ENCODE measurements at regions of chr4 and their contacts with region 1.

Region 1: DNA sequence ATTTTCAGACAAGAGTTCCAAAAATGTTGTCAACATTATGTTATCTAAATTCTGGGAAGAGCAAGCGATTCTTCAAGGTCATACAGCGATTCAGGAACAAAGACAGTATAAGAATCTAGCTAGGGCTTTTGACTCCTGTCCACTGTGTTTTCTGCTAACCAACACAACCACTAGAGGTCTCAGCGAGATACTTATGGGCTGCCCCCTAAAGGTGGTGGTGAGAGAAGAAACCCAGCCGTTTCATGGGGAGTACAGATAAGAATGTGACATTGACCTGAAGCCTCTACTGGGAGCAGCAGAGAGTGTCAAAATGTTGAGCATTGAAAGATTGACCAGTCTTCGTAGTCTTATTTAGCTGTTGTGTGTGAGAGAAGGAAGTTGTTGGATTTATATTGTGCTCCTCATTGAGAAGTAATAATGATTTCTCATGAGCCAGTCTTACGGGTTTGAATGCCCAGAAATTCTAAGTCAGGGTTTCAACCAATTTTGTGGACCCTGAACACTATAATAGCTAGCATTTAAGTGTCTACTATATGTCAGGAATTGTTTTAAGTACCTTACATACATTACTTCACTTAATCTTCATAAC is 168.3 kb downstream of the SPRY1 start:
- DNase-seq: peak; percentile 15 to 81 (median 52)
- ATAC-seq: peak; percentile 98
- H3K4me3 ChIP-seq: no peak overlapping the region
- H3K4me3 Mint-ChIP-seq: no peak overlapping the region
- H3K27ac ChIP-seq: no peak overlapping the region
- H3K27ac Mint-ChIP-seq: no peak overlapping the region
- H3K4me1 ChIP-seq: no peaks in the 10 kb centered on the region
- H3K4me1 Mint-ChIP-seq: peaks cover 3% of the 10 kb centered on the region
- H3K27me3 ChIP-seq: no peaks in the 10 kb centered on the region
- H3K27me3 Mint-ChIP-seq: peaks cover 2% of the 10 kb centered on the region
- CTCF ChIP-seq: peak; percentile 95

Region 2: GRCh38 chr4:123102897-123103471 is 461.9 kb before region 1 on chr4:
- CTCF ChIA-PET with region 1: no interaction called
- POLR2A ChIA-PET with region 1: no interaction called
- intact Hi-C with region 1: loop called in 1 of 2 experiments (anchors 10 kb)
- DNase-seq: peak in 2 of 9 experiments; percentile 16 to 38
- ATAC-seq: peak; percentile 49
- H3K4me3 ChIP-seq: no peak overlapping the region
- H3K4me3 Mint-ChIP-seq: no peak overlapping the region
- H3K27ac ChIP-seq: no peak overlapping the region
- H3K27ac Mint-ChIP-seq: no peak overlapping the region
- H3K4me1 ChIP-seq: no peaks in the 10 kb centered on the region
- H3K4me1 Mint-ChIP-seq: no peaks in the 10 kb centered on the region
- H3K27me3 ChIP-seq: no peaks in the 10 kb centered on the region
- H3K27me3 Mint-ChIP-seq: no peaks in the 10 kb centered on the region
- CTCF ChIP-seq: peak; percentile 61

Region 3: DNA sequence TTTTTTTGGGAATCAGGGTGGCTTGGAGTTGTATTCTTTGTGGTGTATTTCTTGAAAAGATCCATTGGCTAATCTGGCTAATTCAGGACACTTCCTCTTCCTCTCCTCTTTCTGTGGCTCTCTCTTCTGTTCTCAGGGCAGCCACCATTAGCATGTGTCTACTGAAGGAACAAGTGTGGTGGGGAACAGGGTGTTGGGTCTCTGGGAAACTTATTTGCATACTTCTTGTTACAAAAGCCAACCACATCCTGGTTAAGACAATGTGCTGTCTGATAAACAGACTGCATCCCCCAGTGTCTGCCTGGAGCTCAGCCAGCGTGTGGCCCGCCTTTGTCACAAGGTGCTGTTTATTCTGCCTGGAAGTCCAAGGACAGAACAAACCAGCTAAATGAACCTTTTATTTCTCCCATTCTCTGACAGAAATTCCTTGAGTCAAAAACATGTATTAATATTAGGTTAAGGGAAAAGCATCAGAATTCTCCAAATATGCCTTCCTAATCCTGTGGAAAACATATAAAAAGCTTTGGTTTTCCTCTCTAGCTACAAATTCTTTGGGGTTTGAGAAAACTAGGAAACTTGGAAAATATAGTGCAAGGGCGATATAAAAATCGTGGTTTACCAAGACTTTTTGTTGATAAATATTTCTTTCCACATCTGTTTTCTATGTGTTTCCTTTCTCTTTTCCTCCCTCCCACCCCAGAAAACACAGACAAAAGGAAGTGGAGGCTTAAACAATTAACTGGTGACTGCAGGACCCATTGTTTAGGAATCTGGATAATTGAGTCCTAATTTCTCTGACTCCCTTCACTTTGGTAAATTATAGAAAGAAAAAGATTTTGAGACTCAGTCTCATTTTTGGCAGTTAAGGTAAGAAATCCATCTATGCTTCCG is 35.3 kb after region 1 on chr4:
- CTCF ChIA-PET with region 1: interaction called, 6 read pairs
- POLR2A ChIA-PET with region 1: interaction called, 5 read pairs
- intact Hi-C with region 1: loop called in 1 of 2 experiments (anchors 2 kb)
- DNase-seq: peak; percentile 25 to 88 (median 65)
- ATAC-seq: peak; percentile 97
- H3K4me3 ChIP-seq: no peak overlapping the region
- H3K4me3 Mint-ChIP-seq: peak overlapping the region; percentile 51
- H3K27ac ChIP-seq: peak overlapping the region in 1 of 2 experiments; percentile 54
- H3K27ac Mint-ChIP-seq: peak overlapping the region; percentile 95
- H3K4me1 ChIP-seq: peaks cover 26% of the 10 kb centered on the region
- H3K4me1 Mint-ChIP-seq: peaks cover 57% of the 10 kb centered on the region
- H3K27me3 ChIP-seq: no peaks in the 10 kb centered on the region
- H3K27me3 Mint-ChIP-seq: no peaks in the 10 kb centered on the region
- CTCF ChIP-seq: no peak

Region 4: DNA sequence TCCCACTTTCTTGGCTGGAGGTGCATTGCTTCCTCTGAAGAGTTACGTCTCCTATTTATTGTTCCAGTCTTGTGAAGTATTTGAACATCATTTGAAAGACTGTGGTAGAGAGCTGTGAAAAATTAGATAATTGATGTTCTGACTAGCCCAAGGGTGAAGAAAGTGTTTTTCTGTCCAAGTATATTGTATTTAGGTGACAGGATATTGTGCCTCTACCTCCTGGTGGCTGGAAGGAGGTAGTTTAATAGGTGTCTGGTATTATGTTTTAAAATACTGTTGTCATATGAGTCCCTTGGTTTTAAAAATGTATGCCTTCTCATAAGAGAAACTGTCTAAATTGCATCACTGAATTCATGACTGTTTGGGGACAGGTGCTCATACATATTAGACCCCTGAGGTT is 57.7 kb after region 1 on chr4:
- CTCF ChIA-PET with region 1: interaction called, 10 read pairs
- POLR2A ChIA-PET with region 1: no interaction called
- intact Hi-C with region 1: loop called (anchors 2 to 5 kb)
- DNase-seq: peak in 1 of 9 experiments; percentile 17
- ATAC-seq: no peak
- H3K4me3 ChIP-seq: no peak overlapping the region
- H3K4me3 Mint-ChIP-seq: no peak overlapping the region
- H3K27ac ChIP-seq: no peak overlapping the region
- H3K27ac Mint-ChIP-seq: no peak overlapping the region
- H3K4me1 ChIP-seq: peaks cover 2% of the 10 kb centered on the region
- H3K4me1 Mint-ChIP-seq: peaks cover 10% of the 10 kb centered on the region
- H3K27me3 ChIP-seq: no peaks in the 10 kb centered on the region
- H3K27me3 Mint-ChIP-seq: no peaks in the 10 kb centered on the region
- CTCF ChIP-seq: no peak

Region 5: GRCh38 chr4:123671633-123672404 is 107.0 kb after region 1 on chr4:
- CTCF ChIA-PET with region 1: interaction called, 11 read pairs
- POLR2A ChIA-PET with region 1: no interaction called
- intact Hi-C with region 1: no loop called
- DNase-seq: no peak
- ATAC-seq: no peak
- H3K4me3 ChIP-seq: no peak overlapping the region
- H3K4me3 Mint-ChIP-seq: peak overlapping the region; percentile 37
- H3K27ac ChIP-seq: no peak overlapping the region
- H3K27ac Mint-ChIP-seq: no peak overlapping the region
- H3K4me1 ChIP-seq: no peaks in the 10 kb centered on the region
- H3K4me1 Mint-ChIP-seq: peaks cover 5% of the 10 kb centered on the region
- H3K27me3 ChIP-seq: no peaks in the 10 kb centered on the region
- H3K27me3 Mint-ChIP-seq: no peaks in the 10 kb centered on the region
- CTCF ChIP-seq: no peak

Region 6: GRCh38 chr4:125538670-125539069 is 1973.8 kb after region 1 on chr4:
- CTCF ChIA-PET with region 1: no interaction called
- POLR2A ChIA-PET with region 1: no interaction called
- intact Hi-C with region 1: no loop called
- DNase-seq: no peak
- ATAC-seq: no peak
- H3K4me3 ChIP-seq: no peak overlapping the region
- H3K4me3 Mint-ChIP-seq: no peak overlapping the region
- H3K27ac ChIP-seq: no peak overlapping the region
- H3K27ac Mint-ChIP-seq: no peak overlapping the region
- H3K4me1 ChIP-seq: no peaks in the 10 kb centered on the region
- H3K4me1 Mint-ChIP-seq: no peaks in the 10 kb centered on the region
- H3K27me3 ChIP-seq: no peaks in the 10 kb centered on the region
- H3K27me3 Mint-ChIP-seq: no peaks in the 10 kb centered on the region
- CTCF ChIP-seq: no peak

Measured in CD8-positive, alpha-beta T cell (primary cell).